Posterior vena cava (tissue), 2 donors: ENCODE measurements at regions of chr2 and their contacts with region 1.

Region 1: DNA sequence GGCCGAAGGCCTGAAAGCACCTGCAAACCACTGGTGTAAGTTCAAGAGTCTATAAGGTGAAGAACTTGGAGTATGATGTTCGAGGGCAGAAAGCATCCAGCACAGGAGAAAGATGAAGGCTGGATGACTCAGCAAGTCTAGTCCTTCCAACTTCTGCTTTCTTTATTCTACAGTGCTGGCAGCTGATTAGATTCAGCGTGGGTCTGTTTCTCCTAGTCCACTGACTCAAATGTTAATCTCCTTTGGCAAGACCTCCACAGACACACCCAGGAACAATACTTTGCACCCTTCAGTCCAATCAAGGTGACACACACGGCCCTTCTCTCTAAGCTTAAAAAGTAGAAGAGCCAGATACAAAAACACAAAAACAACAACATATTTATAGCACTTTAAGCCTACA is 43.4 kb downstream of the NMS start:
- DNase-seq: no peak

Region 2: DNA sequence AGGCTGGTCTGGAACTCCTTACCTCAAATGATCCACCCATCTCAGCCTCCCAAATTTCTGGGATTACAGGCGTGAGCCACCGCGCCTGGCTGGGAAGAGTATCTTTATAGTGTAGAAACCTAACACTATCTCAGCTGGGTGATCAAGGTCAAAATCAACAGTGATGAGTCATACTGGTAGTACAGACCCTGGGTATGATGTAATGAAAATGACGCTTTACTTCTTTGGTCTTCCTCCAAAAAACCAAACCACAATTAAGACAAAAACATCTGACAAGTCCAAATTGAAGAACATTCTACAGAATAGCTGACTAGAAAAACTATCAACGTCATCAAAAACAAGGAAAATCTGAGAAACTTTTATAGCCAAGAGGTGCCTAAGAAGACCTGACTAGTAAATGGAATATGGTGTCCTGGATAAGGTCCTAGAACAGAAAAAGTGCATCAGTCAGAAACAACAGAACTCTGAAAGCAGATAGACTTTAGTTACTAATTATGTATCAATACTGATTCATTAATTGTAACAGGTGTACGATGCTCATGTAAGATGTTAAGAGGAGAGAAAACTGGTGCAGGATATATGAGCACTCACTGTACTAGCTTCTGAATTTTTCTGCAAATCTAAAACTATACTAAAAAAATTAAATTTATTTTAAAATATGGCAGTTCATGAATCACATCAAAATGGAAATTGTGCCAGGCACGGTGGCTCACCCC is 74.6 kb after region 1 on chr2:
- intact Hi-C with region 1: loop called in 1 of 2 experiments (anchors 2 kb)
- DNase-seq: no peak